GM12878 (cell line): ENCODE measurements at regions of chr9 and their contacts with region 1.

Region 1: DNA sequence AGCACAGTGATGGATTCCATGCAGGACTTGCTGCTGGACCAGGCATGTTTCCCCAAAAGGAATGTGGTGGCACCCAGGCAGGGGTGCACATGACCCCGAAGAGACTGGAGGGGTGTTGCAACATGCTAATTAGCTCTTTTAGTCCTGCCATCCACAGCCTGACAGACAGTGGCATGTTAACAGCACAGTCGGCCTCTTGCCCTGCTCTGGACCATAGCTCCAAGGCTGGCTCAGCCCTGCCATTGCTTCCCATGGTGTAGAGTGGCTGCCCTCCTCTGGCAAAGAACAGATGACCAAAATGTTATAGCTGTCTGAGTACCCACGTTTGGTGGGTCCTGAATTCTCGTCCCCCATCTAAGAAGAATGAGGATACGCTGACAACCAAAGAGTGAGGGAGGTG is 736.4 kb upstream of the PTPRD start:
- DNase-seq: no peak
- ATAC-seq: no peak
- H3K4me3 ChIP-seq: no peak overlapping the region
- H3K27ac ChIP-seq: no peak overlapping the region
- H3K4me1 ChIP-seq: no peaks in the 10 kb centered on the region
- H3K27me3 ChIP-seq: no peaks in the 10 kb centered on the region
- CTCF ChIP-seq: no peak
- EP300 ChIP-seq: no peak
- POLR2A ChIP-seq: no peak
- RAD21 ChIP-seq: no peak

Region 2: DNA sequence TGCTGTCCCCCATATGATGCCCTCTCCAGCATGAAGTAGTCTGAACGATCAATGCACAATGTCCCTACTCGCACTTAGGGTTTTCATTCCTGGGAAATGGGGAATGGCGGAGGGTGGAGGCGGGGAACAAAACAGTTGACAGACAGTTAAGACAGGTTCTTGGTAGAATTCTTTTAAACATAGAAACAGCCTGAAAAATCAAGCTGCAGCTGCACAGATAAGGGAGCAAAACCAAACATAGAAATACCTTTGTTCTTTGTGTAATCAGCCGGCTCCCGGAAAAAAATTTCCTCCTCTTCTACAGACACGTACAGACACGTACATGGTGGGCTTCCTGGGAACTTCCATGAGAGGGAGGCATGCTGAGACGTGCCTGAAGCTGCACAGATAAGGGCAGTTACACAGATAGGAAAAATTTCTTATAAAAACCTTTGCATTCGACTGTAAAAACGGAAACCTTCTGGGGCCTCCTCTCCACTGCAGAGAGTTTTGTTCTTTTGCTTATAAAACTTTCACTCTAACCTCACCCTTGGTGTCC is 74.0 kb before region 1 on chr9:
- CTCF ChIA-PET with region 1: no interaction called
- POLR2A ChIA-PET with region 1: no interaction called
- RAD21 ChIA-PET with region 1: no interaction called
- SMC1A ChIA-PET with region 1: no interaction called
- in situ Hi-C with region 1: no loop called
- intact Hi-C with region 1: loop called (anchors 10 kb)
- DNase-seq: no peak
- ATAC-seq: no peak
- H3K4me3 ChIP-seq: no peak overlapping the region
- H3K27ac ChIP-seq: no peak overlapping the region
- H3K4me1 ChIP-seq: no peaks in the 10 kb centered on the region
- H3K27me3 ChIP-seq: no peaks in the 10 kb centered on the region
- CTCF ChIP-seq: no peak
- EP300 ChIP-seq: no peak
- POLR2A ChIP-seq: no peak
- RAD21 ChIP-seq: no peak